Gastrocnemius medialis (tissue), 4 donors: ENCODE measurements at regions of chr19 and their contacts with region 1.

Region 1: DNA sequence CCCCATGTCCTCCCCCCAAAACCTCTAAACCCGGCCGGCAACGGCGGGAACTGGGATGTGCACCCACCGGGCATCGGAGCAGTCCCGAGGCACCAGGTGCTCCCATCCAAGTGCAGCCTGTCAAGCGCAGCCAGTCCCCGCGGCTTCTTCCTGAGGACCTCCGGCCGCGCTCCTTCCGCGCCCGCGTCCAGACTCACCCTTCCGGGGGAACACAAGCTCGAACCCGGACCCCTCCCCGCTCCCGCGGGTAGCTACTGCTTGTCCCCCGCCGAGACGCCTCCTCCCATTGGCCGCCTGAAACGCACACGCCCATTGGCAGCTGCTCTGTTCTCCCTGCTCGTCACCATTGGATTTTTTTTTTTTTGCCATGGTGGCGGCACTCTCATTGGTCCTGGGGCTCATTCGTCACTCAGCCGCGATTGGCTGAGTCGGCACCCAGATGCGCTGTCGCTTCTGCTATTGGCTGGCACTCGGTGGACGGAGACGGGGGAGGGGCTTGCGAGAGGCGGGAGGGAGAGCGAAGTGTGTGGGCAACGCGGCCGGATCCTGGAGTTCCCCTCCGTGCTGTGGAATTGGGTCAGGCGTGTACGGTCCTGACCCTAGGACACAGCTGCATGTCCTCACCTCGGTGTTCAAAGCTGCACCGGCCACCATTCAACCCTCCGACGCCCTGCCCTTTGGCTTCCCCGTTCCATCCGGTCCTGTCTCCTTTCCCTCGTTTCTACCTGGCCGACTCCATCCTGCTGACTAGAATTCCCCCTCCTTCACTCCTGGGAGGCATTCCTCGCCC is at the start of gene TYK2:
- DNase-seq: peak; percentile 96 to 98
- ATAC-seq: peak; percentile 99 to 100
- H3K4me3 ChIP-seq: peak within 1 kb of the TSS; percentile 90 to 98 (median 95)
- H3K27ac ChIP-seq: peak within 1 kb of the TSS; percentile 82 to 92 (median 82)
- H3K4me1 ChIP-seq: peaks cover 10 to 14% of the 10 kb centered on the region in 2 donors
- H3K27me3 ChIP-seq: no peaks in the 10 kb centered on the region
- CTCF ChIP-seq: no peak
- POLR2A ChIP-seq: peak; percentile 40 to 53
- total RNA-seq, gene TYK2: 32.6 to 58.5 (median 50.9) TPM

Region 2: GRCh38 chr19:9547870-9548269 is 832.6 kb before region 1 on chr19:
- in situ Hi-C with region 1: no loop called
- intact Hi-C with region 1: no loop called
- DNase-seq: no peak
- ATAC-seq: no peak
- H3K4me3 ChIP-seq: no peak overlapping the region
- H3K27ac ChIP-seq: no peak overlapping the region
- H3K4me1 ChIP-seq: no peaks in the 10 kb centered on the region
- H3K27me3 ChIP-seq: no peaks in the 10 kb centered on the region
- CTCF ChIP-seq: no peak
- POLR2A ChIP-seq: no peak

Region 3: GRCh38 chr19:9923440-9923839 is 457.1 kb before region 1 on chr19:
- in situ Hi-C with region 1: loop called (anchors 10 to 25 kb)
- intact Hi-C with region 1: no loop called
- DNase-seq: no peak
- ATAC-seq: no peak
- H3K4me3 ChIP-seq: no peak overlapping the region
- H3K27ac ChIP-seq: no peak overlapping the region
- H3K4me1 ChIP-seq: no peaks in the 10 kb centered on the region
- H3K27me3 ChIP-seq: no peaks in the 10 kb centered on the region
- CTCF ChIP-seq: no peak
- POLR2A ChIP-seq: no peak

Region 4: DNA sequence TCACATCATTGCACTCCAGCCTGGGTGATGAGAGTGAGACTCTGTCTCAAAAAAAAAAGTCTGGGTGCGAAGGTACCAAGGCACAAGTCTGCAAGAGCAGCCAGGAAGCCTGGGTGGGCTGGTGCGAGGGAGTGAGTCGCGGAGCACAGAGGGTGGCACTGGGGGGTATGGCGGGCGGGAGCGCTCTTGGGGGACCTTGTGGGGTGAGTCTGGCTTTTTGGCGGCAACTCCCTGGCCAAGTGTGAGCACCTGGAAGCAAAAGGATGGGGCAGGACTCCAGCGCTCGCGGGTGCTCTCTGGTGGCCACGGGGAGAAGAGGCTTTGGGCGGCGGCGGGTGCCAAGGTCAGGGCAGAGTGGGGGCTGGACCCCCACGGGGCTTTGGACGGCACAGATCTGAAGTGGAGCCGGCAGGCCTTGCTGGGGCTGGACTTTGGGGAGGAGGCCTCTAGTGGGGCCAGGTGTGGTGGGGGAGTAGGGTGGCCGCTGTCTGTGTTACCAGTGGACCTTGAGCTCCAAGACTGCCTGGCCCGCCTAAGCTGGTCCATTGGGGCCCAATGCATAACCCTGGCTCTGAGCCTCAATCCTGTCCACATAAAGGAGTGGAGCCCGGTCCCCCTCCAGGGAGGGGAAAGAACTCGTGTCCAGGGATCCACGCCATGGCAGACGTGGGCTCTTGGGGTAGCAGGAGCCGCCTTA is 267.5 kb before region 1 on chr19:
- in situ Hi-C with region 1: no loop called
- intact Hi-C with region 1: loop called (anchors 10 kb)
- DNase-seq: no peak
- ATAC-seq: no peak
- H3K4me3 ChIP-seq: no peak overlapping the region
- H3K27ac ChIP-seq: peak overlapping the region in 1 of 4 donors; percentile 27
- H3K4me1 ChIP-seq: peaks cover 4 to 17% of the 10 kb centered on the region in 2 donors
- H3K27me3 ChIP-seq: no peaks in the 10 kb centered on the region
- CTCF ChIP-seq: peak in 4 of 5 experiments; percentile 27 to 54 (median 38)
- POLR2A ChIP-seq: no peak

Region 5: GRCh38 chr19:10315335-10316214 is 64.9 kb before region 1 on chr19 and contains the start of gene FDX2:
- in situ Hi-C with region 1: no loop called
- intact Hi-C with region 1: loop called (anchors 1 kb)
- DNase-seq: peak; percentile 63 to 73
- ATAC-seq: peak; percentile 90 to 92
- H3K4me3 ChIP-seq: peak within 1 kb of the TSS; percentile 92 to 98 (median 94)
- H3K27ac ChIP-seq: peak within 1 kb of the TSS; percentile 80 to 89 (median 86)
- H3K4me1 ChIP-seq: peaks cover 8 to 12% of the 10 kb centered on the region in 2 donors
- H3K27me3 ChIP-seq: no peaks in the 10 kb centered on the region
- CTCF ChIP-seq: peak in 1 of 5 experiments; percentile 17
- POLR2A ChIP-seq: no peak
- total RNA-seq, gene FDX2: 9.1 to 32.0 (median 21.9) TPM

Region 6: DNA sequence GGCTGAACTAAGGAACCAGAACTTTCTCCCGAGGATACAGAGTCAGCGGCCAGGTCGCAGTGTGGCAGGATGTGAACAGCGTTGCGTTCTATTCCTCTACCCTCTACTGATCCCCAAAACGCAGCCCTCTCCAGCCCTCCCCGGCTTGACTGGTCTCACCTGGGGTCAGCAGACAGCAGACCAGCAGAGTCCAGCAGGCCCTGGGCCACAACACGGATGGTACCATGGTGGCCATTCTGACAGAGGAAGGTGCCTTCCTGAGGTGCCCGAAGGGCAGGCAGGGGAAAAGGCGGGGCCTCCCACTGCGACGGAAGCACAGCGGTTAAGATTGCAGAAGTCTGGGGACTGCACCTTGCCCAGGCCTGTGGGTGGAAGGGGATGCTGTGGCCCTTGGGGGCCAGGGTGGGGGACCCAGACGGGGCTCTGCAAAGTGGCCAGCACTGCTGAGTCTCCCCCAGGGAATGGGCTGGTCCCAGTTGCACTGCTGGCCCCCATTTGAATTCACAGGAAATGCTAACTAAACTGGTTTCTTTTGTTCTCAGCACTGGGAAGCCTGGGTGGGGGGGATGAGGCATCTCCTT is 41.0 kb before region 1 on chr19 and contains the start of gene ICAM3:
- in situ Hi-C with region 1: no loop called
- intact Hi-C with region 1: no loop called
- DNase-seq: no peak
- ATAC-seq: no peak
- H3K4me3 ChIP-seq: no peak within 1 kb of the TSS
- H3K27ac ChIP-seq: no peak within 1 kb of the TSS
- H3K4me1 ChIP-seq: peaks cover 2 to 3% of the 10 kb centered on the region in 2 donors
- H3K27me3 ChIP-seq: no peaks in the 10 kb centered on the region
- CTCF ChIP-seq: no peak
- POLR2A ChIP-seq: no peak
- total RNA-seq, gene ICAM3: 2.0 to 5.0 (median 3.2) TPM